Posterior cingulate gyrus (tissue), 11 donors: ENCODE measurements at regions of chr19 and their contacts with region 1.

Region 1: GRCh38 chr19:44002566-44003460 is at the start of gene ZNF230:
- DNase-seq: peak; percentile 84 to 98 (median 92)

Region 2: GRCh38 chr19:43950834-43951645 is 51.8 kb before region 1 on chr19 and contains the start of gene ZNF221:
- intact Hi-C with region 1: loop called (anchors 1 kb)
- DNase-seq: peak; percentile 83 to 98 (median 88)

Region 3: GRCh38 chr19:44025217-44025936 is 22.6 kb after region 1 on chr19 and contains the start of gene ZNF222:
- intact Hi-C with region 1: loop called (anchors 2 kb)
- DNase-seq: peak; percentile 71 to 97 (median 84)

Region 4: GRCh38 chr19:44071824-44072542 is 69.2 kb after region 1 on chr19 and contains the start of gene ZNF284:
- intact Hi-C with region 1: loop called (anchors 5 kb)
- DNase-seq: peak; percentile 86 to 98 (median 90)

Region 5: GRCh38 chr19:44304659-44305193 is 301.9 kb after region 1 on chr19 and contains the start of gene ZNF235:
- intact Hi-C with region 1: loop called (anchors 5 kb)
- DNase-seq: peak; percentile 82 to 98 (median 89)